HCT116 (cell line): ENCODE measurements at regions of chr1 and their contacts with region 1.

Region 1: DNA sequence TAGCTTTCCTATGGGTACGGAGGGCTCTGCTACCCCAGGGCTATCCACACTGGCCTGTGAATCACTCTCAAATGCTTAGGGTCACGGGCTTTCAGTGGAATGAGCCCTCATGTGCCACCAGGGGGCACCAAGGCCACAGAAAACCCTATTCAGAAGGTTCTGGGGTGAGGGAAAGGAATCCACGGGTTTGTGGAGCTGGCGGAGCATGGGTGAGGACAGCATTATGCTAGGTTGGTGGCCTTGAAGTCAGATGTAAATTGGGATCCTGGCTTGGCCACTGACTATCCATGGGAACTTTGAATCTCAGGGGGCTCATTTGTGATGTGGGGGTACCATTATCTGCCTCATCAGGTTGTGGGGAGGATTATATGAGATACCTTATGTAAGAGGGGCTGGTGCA is 5.1 kb upstream of the LAMTOR5 start:
- DNase-seq: peak; percentile 54
- ATAC-seq: peak; percentile 78
- H3K4me3 ChIP-seq: no peak overlapping the region
- H3K27ac ChIP-seq: no peak overlapping the region
- H3K4me1 ChIP-seq: peaks cover 4 to 8% of the 10 kb centered on the region in 2 experiments; a peak in 3 of 4 replicates
- H3K27me3 ChIP-seq: no peaks in the 10 kb centered on the region
- CTCF ChIP-seq: peak; percentile 83 to 85 (median 84)
- POLR2A ChIP-seq: no peak
- RAD21 ChIP-seq: peak; percentile 94

Region 2: GRCh38 chr1:110433803-110434202 is 21.2 kb after region 1 on chr1:
- CTCF ChIA-PET with region 1: interaction called, 4 read pairs
- POLR2A ChIA-PET with region 1: no interaction called
- RAD21 ChIA-PET with region 1: interaction called, 3 read pairs
- intact Hi-C with region 1: loop called (anchors 2 kb)
- DNase-seq: peak; percentile 51
- ATAC-seq: peak; percentile 99
- H3K4me3 ChIP-seq: no peak overlapping the region
- H3K27ac ChIP-seq: no peak overlapping the region
- H3K4me1 ChIP-seq: peaks cover 24 to 39% of the 10 kb centered on the region in 2 experiments
- H3K27me3 ChIP-seq: 0 out of 2 replicates have a peak, but pooled peaks cover 6% of the 10 kb centered on the region
- CTCF ChIP-seq: peak in 2 of 3 experiments; percentile 33 to 40; a peak in 3 of 6 replicates
- POLR2A ChIP-seq: no peak
- RAD21 ChIP-seq: peak; percentile 33; the same call in 1 of the 2 replicates